Pancreas (tissue), 10 donors: ENCODE measurements at regions of chrX and their contacts with region 1.

Region 1: DNA sequence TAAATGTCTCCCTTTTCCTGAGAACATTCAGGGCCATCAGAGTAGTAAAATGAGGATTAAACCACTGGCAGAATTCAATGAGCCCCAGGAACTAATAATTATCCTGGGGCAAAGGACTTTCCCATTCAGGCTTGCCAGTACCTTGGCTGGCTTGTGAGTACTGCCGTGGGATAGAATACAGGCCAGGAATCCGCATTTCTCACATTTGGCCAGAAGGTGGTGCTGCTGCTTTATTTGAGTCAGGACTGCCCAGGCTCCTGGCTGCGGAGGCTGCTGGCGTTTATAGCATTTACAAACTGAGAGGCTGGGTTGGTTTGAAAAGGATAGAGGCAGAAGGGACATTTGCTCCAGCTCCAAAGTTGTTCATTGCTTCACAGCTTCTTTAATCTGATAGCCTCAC is 91.4 kb downstream of the RTL9 start:
- DNase-seq: peak; percentile 54 to 87 (median 82)
- ATAC-seq: peak; percentile 96 to 100 (median 98)
- H3K4me3 ChIP-seq: no peak overlapping the region
- H3K27ac ChIP-seq: no peak overlapping the region
- H3K4me1 ChIP-seq: no peaks in the 10 kb centered on the region
- H3K27me3 ChIP-seq: no peaks in the 10 kb centered on the region
- CTCF ChIP-seq: peak; percentile 39 to 76 (median 69)

Region 2: GRCh38 chrX:110671068-110671803 is 221.2 kb after region 1 on chrX:
- intact Hi-C with region 1: loop called in 1 of 3 experiments (anchors 5 kb)
- DNase-seq: no peak
- ATAC-seq: no peak
- H3K4me3 ChIP-seq: no peak overlapping the region
- H3K27ac ChIP-seq: no peak overlapping the region
- H3K4me1 ChIP-seq: no peaks in the 10 kb centered on the region
- H3K27me3 ChIP-seq: no peaks in the 10 kb centered on the region
- CTCF ChIP-seq: no peak

Region 3: DNA sequence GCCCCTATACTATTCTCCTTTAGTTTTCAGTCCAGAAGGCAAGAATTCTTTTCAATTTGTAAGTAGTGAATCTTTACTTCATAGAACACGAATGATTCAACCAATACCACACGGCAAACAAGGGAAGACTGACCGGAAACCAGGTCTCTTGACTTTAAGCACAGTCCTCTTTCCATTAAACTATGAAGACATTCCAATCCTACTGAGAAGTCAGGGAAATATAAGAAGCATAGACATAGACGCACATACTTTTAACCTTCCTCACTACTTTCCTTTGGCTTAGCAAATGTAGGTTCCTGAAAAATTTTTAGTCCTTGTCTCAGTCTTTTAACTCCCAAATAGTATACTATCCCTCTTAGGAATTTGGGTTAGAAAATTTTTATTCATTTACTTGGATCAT is 336.4 kb after region 1 on chrX:
- intact Hi-C with region 1: no loop called
- DNase-seq: no peak
- ATAC-seq: no peak
- H3K4me3 ChIP-seq: no peak overlapping the region
- H3K27ac ChIP-seq: no peak overlapping the region
- H3K4me1 ChIP-seq: no peaks in the 10 kb centered on the region
- H3K27me3 ChIP-seq: peaks cover 0 to 12% (median 0%) of the 10 kb centered on the region in 4 donors
- CTCF ChIP-seq: no peak

Region 4: GRCh38 chrX:110847334-110847733 is 397.3 kb after region 1 on chrX:
- intact Hi-C with region 1: loop called in 2 of 3 experiments (anchors 5 kb)
- DNase-seq: no peak
- ATAC-seq: peak; percentile 79 to 92 (median 89)
- H3K4me3 ChIP-seq: no peak overlapping the region
- H3K27ac ChIP-seq: no peak overlapping the region
- H3K4me1 ChIP-seq: no peaks in the 10 kb centered on the region
- H3K27me3 ChIP-seq: no peaks in the 10 kb centered on the region
- CTCF ChIP-seq: peak; percentile 47 to 66 (median 54)